ENCODE measurements at regions of chr1 and their contacts with region 1.

Region 1: DNA sequence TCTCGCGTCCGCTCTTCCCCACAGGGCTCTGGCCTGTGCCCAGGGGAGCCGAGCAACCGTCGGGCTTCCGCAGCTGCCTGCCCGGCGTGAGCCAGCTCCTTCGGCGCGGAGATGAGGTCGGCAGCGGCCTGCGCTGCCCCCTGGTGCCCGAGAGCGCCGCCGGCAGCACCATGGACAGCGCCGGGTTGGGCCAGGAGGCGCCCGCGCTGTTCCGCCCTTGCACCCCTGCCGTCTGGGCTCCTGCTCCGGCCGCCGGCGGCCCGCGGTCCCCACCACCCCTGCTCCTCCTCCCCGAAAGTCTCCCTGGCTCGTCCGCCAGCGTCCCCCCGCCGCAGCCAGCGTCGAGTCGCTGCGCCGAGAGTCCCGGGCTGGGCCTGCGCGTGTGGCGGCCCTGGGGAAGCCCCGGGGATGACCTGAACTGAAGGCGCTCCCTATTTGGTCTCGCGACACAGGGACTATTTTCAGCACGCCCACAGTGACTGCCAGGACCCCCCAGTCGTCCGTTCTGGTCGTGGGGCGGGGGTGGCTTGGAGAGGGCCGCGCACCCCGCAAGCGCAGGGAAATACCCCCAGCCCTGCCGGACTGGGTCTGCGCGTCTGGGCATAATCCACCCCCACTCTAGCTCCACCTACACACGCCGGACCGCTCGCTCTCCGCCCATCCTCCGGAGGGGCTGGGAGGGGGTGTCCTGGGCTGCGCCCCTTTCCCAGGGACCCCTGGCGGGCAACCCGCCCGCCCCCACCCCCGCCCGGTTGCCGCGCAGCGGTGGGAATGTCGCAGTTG is 1.3 kb downstream of the HES3 start:
- DNase-seq: peak; percentile 79
- H3K4me3 Mint-ChIP-seq: no peak overlapping the region
- H3K27ac Mint-ChIP-seq: no peak overlapping the region
- H3K4me1 Mint-ChIP-seq: peaks cover 14% of the 10 kb centered on the region
- H3K27me3 Mint-ChIP-seq: peaks cover 54% of the 10 kb centered on the region

Region 2: GRCh38 chr1:5493851-5494311 is 751.4 kb before region 1 on chr1:
- CTCF ChIA-PET with region 1: no interaction called
- intact Hi-C with region 1: no loop called
- DNase-seq: no peak
- H3K4me3 Mint-ChIP-seq: no peak overlapping the region
- H3K27ac Mint-ChIP-seq: no peak overlapping the region
- H3K4me1 Mint-ChIP-seq: no peaks in the 10 kb centered on the region
- H3K27me3 Mint-ChIP-seq: no peaks in the 10 kb centered on the region

Region 3: DNA sequence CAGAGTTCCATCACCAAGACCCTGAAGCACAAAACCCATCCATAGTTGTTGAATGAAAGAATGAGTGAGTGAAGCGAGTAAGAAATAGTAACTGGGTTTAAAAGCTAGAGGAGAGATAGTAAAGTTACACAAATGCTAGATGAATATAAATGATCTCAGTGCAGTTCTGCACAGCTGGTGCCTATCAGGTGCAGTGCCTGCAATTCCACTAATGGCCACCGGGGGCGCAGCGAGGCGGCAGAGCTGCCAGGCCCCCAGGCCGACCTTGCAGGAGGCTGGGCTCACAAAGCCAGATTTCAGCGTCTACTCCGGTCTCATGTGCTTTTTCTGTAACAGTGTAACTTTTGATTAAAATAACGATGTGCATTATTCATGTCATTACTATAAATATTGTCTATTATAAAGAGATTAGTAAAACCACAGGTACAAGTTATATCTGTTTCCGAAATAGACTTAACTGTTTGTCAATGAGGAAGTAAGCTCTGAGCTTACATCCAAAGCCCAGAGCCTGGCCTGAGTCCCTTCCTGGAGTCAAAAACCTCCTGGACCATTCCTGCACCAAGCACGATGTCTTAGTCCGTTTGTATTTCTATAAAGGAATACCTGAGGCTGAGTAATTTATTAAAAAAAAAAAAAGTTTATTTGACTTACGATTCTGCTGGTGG is 730.6 kb before region 1 on chr1:
- CTCF ChIA-PET with region 1: no interaction called
- intact Hi-C with region 1: loop called (anchors 5 kb)
- DNase-seq: peak; percentile 77
- H3K4me3 Mint-ChIP-seq: no peak overlapping the region
- H3K27ac Mint-ChIP-seq: no peak overlapping the region
- H3K4me1 Mint-ChIP-seq: peaks cover 8% of the 10 kb centered on the region
- H3K27me3 Mint-ChIP-seq: peaks cover 9% of the 10 kb centered on the region

Region 4: GRCh38 chr1:6108937-6109614 is 136.2 kb before region 1 on chr1:
- CTCF ChIA-PET with region 1: interaction called, 8 read pairs
- intact Hi-C with region 1: loop called (anchors 1 kb)
- DNase-seq: peak; percentile 63
- H3K4me3 Mint-ChIP-seq: no peak overlapping the region
- H3K27ac Mint-ChIP-seq: no peak overlapping the region
- H3K4me1 Mint-ChIP-seq: no peaks in the 10 kb centered on the region
- H3K27me3 Mint-ChIP-seq: peaks cover 9% of the 10 kb centered on the region

Region 5: GRCh38 chr1:6393400-6394187 is 148.3 kb after region 1 on chr1 and contains the start of gene ACOT7:
- CTCF ChIA-PET with region 1: interaction called, 25 read pairs
- intact Hi-C with region 1: loop called (anchors 2 kb)
- DNase-seq: peak; percentile 94
- H3K4me3 Mint-ChIP-seq: peak within 1 kb of the TSS; percentile 81
- H3K27ac Mint-ChIP-seq: peak within 1 kb of the TSS; percentile 84
- H3K4me1 Mint-ChIP-seq: peaks cover 21% of the 10 kb centered on the region
- H3K27me3 Mint-ChIP-seq: no peaks in the 10 kb centered on the region
- total RNA-seq, gene ACOT7: 74.2 to 77.6 TPM

Region 6: DNA sequence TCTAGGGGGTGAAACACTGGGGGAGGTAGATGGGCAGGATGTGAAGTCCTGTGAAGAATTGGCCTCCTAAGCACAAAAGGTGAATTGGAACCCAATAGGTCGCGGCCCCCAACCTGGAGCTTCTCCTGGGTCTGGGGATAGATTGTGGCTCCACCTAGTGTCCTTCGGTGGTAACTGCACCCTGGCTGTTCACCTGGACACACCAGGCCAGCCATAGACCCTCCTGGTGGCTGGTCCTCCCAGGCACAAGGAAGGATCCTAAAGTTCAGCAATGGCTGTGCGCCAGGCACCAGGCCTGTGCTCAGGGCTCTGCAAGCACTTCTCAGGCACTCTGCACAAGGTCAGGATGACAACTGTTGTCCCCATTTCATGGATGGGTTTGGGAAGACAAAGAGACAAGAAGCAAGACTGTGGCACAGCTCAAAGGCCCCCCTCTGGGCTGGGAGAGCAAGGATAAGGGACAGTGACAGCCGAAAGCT is 192.8 kb after region 1 on chr1:
- CTCF ChIA-PET with region 1: interaction called, 25 read pairs
- intact Hi-C with region 1: loop called (anchors 1 kb)
- DNase-seq: peak; percentile 81
- H3K4me3 Mint-ChIP-seq: no peak overlapping the region
- H3K27ac Mint-ChIP-seq: no peak overlapping the region
- H3K4me1 Mint-ChIP-seq: peaks cover 3% of the 10 kb centered on the region
- H3K27me3 Mint-ChIP-seq: peaks cover 27% of the 10 kb centered on the region

Measured in activated naive CD4-positive, alpha-beta T cell treated with anti-CD3 and anti-CD28 coated beads for 36 hours (primary cell).